Caco-2 (cell line): ENCODE measurements at regions of chr7 and their contacts with region 1.

Region 1: GRCh38 chr7:66654123-66654732 is 25.5 kb downstream of the KCTD7 start:
- DNase-seq: peak; percentile 99 to 100
- H3K4me3 ChIP-seq: peak overlapping the region; percentile 96
- H3K4me3 Mint-ChIP-seq: peak overlapping the region; percentile 97
- H3K27ac Mint-ChIP-seq: peak overlapping the region; percentile 98
- H3K4me1 ChIP-seq: no peaks in the 10 kb centered on the region
- H3K4me1 Mint-ChIP-seq: peaks cover 15% of the 10 kb centered on the region
- H3K27me3 ChIP-seq: no peaks in the 10 kb centered on the region
- H3K27me3 Mint-ChIP-seq: no peaks in the 10 kb centered on the region
- CTCF ChIP-seq: peak in 1 of 2 experiments; percentile 31

Region 2: GRCh38 chr7:66493235-66494181 is 160.7 kb before region 1 on chr7:
- CTCF ChIA-PET with region 1: no interaction called
- POLR2A ChIA-PET with region 1: interaction called, 7 read pairs
- intact Hi-C with region 1: loop called (anchors 1 kb)
- DNase-seq: peak; percentile 98 to 99
- H3K4me3 ChIP-seq: peak overlapping the region; percentile 61
- H3K4me3 Mint-ChIP-seq: peak overlapping the region; percentile 84
- H3K27ac Mint-ChIP-seq: peak overlapping the region; percentile 98
- H3K4me1 ChIP-seq: 0 out of 2 replicates have a peak, but pooled peaks cover 5% of the 10 kb centered on the region
- H3K4me1 Mint-ChIP-seq: no peaks in the 10 kb centered on the region
- H3K27me3 ChIP-seq: no peaks in the 10 kb centered on the region
- H3K27me3 Mint-ChIP-seq: no peaks in the 10 kb centered on the region
- CTCF ChIP-seq: peak in 1 of 2 experiments; percentile 29

Region 3: GRCh38 chr7:66557608-66558143 is 96.6 kb before region 1 on chr7:
- CTCF ChIA-PET with region 1: interaction called, 4 read pairs
- POLR2A ChIA-PET with region 1: no interaction called
- intact Hi-C with region 1: loop called (anchors 5 kb)
- DNase-seq: peak; percentile 62 to 85
- H3K4me3 ChIP-seq: no peak overlapping the region
- H3K4me3 Mint-ChIP-seq: no peak overlapping the region
- H3K27ac Mint-ChIP-seq: peak overlapping the region; percentile 48
- H3K4me1 ChIP-seq: no peaks in the 10 kb centered on the region
- H3K4me1 Mint-ChIP-seq: no peaks in the 10 kb centered on the region
- H3K27me3 ChIP-seq: no peaks in the 10 kb centered on the region
- H3K27me3 Mint-ChIP-seq: no peaks in the 10 kb centered on the region
- CTCF ChIP-seq: peak; percentile 94 to 95

Region 4: GRCh38 chr7:66591799-66592596 is 62.2 kb before region 1 on chr7:
- CTCF ChIA-PET with region 1: interaction called, 4 read pairs
- POLR2A ChIA-PET with region 1: no interaction called
- intact Hi-C with region 1: loop called (anchors 1 kb)
- DNase-seq: peak; percentile 94 to 95
- H3K4me3 ChIP-seq: peak overlapping the region; percentile 99
- H3K4me3 Mint-ChIP-seq: peak overlapping the region; percentile 97
- H3K27ac Mint-ChIP-seq: peak overlapping the region; percentile 99
- H3K4me1 ChIP-seq: peaks cover 7% of the 10 kb centered on the region; the same call in 1 of the 2 replicates
- H3K4me1 Mint-ChIP-seq: peaks cover 25% of the 10 kb centered on the region
- H3K27me3 ChIP-seq: no peaks in the 10 kb centered on the region
- H3K27me3 Mint-ChIP-seq: no peaks in the 10 kb centered on the region
- CTCF ChIP-seq: no peak

Region 5: DNA sequence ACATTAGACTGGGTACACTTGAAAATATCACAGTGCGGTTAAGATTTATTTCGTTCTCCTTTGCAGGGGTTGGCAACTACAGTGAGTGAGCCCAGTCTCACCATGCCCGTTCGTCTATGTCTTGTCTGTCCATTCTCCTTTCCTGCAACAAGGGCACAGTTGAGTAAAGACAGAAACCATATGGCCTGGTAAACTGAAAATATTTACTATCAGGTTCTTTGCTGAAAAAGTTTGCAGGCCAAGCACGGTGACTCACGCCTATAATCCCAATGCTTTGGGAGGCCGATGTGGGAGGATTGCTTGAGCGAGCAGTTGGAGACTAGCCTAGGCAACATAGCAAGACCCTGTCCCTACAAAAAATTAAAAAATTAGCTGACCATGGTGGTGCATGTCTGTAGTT is 36.9 kb before region 1 on chr7:
- CTCF ChIA-PET with region 1: no interaction called
- POLR2A ChIA-PET with region 1: interaction called, 6 read pairs
- intact Hi-C with region 1: loop called (anchors 2 kb)
- DNase-seq: no peak
- H3K4me3 ChIP-seq: no peak overlapping the region
- H3K4me3 Mint-ChIP-seq: no peak overlapping the region
- H3K27ac Mint-ChIP-seq: no peak overlapping the region
- H3K4me1 ChIP-seq: peaks cover 34% of the 10 kb centered on the region
- H3K4me1 Mint-ChIP-seq: peaks cover 12% of the 10 kb centered on the region
- H3K27me3 ChIP-seq: no peaks in the 10 kb centered on the region
- H3K27me3 Mint-ChIP-seq: no peaks in the 10 kb centered on the region
- CTCF ChIP-seq: no peak

Region 6: DNA sequence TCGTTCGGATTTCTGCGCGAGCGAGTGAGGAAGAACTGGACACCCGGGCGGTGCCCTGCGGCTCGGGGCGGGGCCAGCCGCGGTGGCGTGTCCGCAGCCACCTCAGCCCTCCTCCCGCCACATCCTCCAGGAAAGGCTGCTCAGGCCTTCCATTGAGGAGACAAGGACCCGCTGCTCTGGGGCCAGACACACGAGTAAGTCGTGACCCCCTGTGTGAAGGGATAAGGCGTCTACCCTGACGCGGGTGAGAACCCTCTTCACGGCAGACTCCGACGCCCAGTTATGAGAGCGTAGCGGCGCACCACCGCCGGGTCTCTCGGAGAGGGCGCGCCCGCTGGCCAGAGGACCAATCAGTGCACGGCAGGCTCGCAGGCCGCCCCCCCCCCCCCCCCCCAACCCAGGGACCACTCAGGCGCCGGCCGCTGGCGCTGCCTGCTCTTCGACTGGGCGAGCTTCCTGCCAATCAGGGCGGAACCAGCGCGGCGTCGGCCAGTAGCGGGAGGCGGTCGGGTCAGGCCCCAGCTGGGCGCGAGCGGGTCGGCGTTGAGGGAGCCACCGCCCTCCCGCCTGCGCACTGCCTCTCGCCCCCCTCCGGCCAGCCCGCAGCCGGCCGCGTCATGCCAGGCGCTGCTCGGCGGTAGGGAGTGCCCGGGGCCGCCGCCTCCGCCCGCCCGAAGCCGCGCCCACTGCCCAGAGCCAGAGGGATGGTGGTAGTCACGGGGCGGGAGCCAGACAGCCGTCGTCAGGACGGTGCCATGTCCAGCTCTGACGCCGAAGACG is 25.7 kb before region 1 on chr7 and contains the start of gene KCTD7:
- CTCF ChIA-PET with region 1: no interaction called
- POLR2A ChIA-PET with region 1: interaction called, 16 read pairs
- intact Hi-C with region 1: no loop called
- DNase-seq: peak; percentile 98
- H3K4me3 ChIP-seq: peak within 1 kb of the TSS; percentile 99
- H3K4me3 Mint-ChIP-seq: peak within 1 kb of the TSS; percentile 81
- H3K27ac Mint-ChIP-seq: peak within 1 kb of the TSS; percentile 81
- H3K4me1 ChIP-seq: peaks cover 6% of the 10 kb centered on the region; the same call in 1 of the 2 replicates
- H3K4me1 Mint-ChIP-seq: peaks cover 7% of the 10 kb centered on the region
- H3K27me3 ChIP-seq: no peaks in the 10 kb centered on the region
- H3K27me3 Mint-ChIP-seq: no peaks in the 10 kb centered on the region
- CTCF ChIP-seq: no peak
- total RNA-seq, gene KCTD7: 17.0 and 17.3 TPM in 2 replicates

Region 7: GRCh38 chr7:66681491-66682349 is 27.5 kb after region 1 on chr7:
- CTCF ChIA-PET with region 1: no interaction called
- POLR2A ChIA-PET with region 1: interaction called, 3 read pairs
- intact Hi-C with region 1: loop called (anchors 1 kb)
- DNase-seq: peak; percentile 93 to 95
- H3K4me3 ChIP-seq: peak overlapping the region; percentile 100
- H3K4me3 Mint-ChIP-seq: peak overlapping the region; percentile 96
- H3K27ac Mint-ChIP-seq: peak overlapping the region; percentile 98
- H3K4me1 ChIP-seq: peaks cover 13% of the 10 kb centered on the region; the same call in 1 of the 2 replicates
- H3K4me1 Mint-ChIP-seq: peaks cover 8% of the 10 kb centered on the region
- H3K27me3 ChIP-seq: no peaks in the 10 kb centered on the region
- H3K27me3 Mint-ChIP-seq: no peaks in the 10 kb centered on the region
- CTCF ChIP-seq: no peak